Right ventricle myocardium inferior (tissue), 1 donor: ENCODE measurements at regions of chr7 and their contacts with region 1.

Region 1: GRCh38 chr7:38748056-38748611 is 117.0 kb upstream of the AMPH start:
- DNase-seq: no peak
- ATAC-seq: no peak

Region 2: GRCh38 chr7:38451840-38452239 is 296.3 kb before region 1 on chr7:
- intact Hi-C with region 1: loop called (anchors 10 kb)
- DNase-seq: no peak
- ATAC-seq: peak; percentile 60

Region 3: GRCh38 chr7:38584443-38585210 is 163.5 kb before region 1 on chr7:
- intact Hi-C with region 1: loop called (anchors 10 kb)
- DNase-seq: no peak
- ATAC-seq: peak; percentile 63